Naive thymus-derived CD4-positive, alpha-beta T cell (primary cell): ENCODE measurements at regions of chr13 and their contacts with region 1.

Region 1: GRCh38 chr13:113208424-113209335 is at the start of gene PCID2:
- DNase-seq: peak; percentile 87 to 99 (median 93)
- ATAC-seq: peak; percentile 81
- H3K4me3 ChIP-seq: peak within 1 kb of the TSS; percentile 79
- H3K4me3 Mint-ChIP-seq: peak within 1 kb of the TSS; percentile 87 to 94 (median 90)
- H3K27ac ChIP-seq: peak within 1 kb of the TSS; percentile 88
- H3K27ac Mint-ChIP-seq: peak within 1 kb of the TSS; percentile 83 to 95 (median 92)
- H3K4me1 ChIP-seq: peaks cover 25 to 46% of the 10 kb centered on the region in 2 donors
- H3K4me1 Mint-ChIP-seq: peaks cover 46 to 68% (median 57%) of the 10 kb centered on the region in 7 donors
- H3K27me3 ChIP-seq: no peaks in the 10 kb centered on the region
- H3K27me3 Mint-ChIP-seq: no peaks in the 10 kb centered on the region
- total RNA-seq, gene PCID2: 44.2 to 83.7 (median 77.1) TPM

Region 2: GRCh38 chr13:112689303-112690165 is 519.1 kb before region 1 on chr13 and contains the start of gene ATP11A:
- CTCF ChIA-PET with region 1: no interaction called
- POLR2A ChIA-PET with region 1: no interaction called
- intact Hi-C with region 1: loop called (anchors 2 to 10 kb)
- DNase-seq: peak; percentile 67 to 90 (median 74)
- ATAC-seq: peak; percentile 85
- H3K4me3 ChIP-seq: peak within 1 kb of the TSS; percentile 78
- H3K4me3 Mint-ChIP-seq: peak within 1 kb of the TSS; percentile 79 to 96 (median 94)
- H3K27ac ChIP-seq: peak within 1 kb of the TSS; percentile 88
- H3K27ac Mint-ChIP-seq: peak within 1 kb of the TSS; percentile 79 to 96 (median 90)
- H3K4me1 ChIP-seq: peaks cover 15 to 26% of the 10 kb centered on the region in 2 donors
- H3K4me1 Mint-ChIP-seq: peaks cover 39 to 54% (median 50%) of the 10 kb centered on the region in 7 donors
- H3K27me3 ChIP-seq: no peaks in the 10 kb centered on the region
- H3K27me3 Mint-ChIP-seq: no peaks in the 10 kb centered on the region
- total RNA-seq, gene ATP11A: 45.0 to 111 (median 79.8) TPM

Region 3: DNA sequence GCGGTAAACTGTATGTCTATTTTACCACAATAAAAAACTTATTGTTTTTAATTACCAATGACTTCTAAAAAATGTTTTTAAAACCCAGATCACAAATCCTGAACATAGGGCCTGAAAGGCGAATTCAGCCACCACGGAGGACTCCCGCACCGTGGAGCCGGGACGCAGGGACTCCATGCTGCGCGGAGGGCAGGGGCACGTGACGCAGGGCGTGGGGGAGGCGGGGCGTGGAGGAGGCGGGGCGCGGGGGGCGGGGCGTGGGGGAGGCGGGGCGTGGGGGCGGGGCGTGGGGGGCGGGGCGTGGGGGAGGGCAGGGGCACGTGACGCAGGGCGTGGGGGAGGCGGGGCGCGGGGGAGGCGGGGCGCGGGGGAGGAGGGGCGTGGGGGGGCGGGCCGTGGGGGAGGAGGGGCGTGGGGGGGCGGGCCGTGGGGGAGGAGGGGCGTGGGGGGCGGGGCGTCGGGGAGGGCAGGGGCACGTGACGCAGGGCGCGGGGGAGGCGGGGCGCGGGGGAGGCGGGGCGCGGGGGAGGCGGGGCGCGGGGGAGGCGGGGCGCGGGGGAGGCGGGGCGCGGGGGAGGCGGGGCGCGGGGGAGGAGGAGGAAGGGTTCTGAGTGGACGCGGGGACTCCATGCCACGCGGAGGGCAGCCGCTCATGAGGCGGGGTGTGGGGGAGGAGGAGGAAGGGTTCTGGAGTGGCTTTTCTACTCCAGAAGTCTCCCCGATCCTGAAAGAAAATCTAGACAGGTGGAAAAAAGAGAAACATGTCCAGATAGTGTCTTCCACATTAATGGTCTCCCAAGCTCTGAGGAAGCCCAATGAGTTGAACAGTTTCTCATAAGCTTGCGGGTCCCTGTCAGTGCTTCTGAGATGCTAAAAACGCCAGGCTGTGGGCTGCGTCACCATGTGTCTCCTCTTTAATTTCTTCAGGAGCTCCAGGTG is 54.6 kb before region 1 on chr13:
- CTCF ChIA-PET with region 1: no interaction called
- POLR2A ChIA-PET with region 1: interaction called, 19 read pairs
- intact Hi-C with region 1: loop called (anchors 1 kb)
- DNase-seq: peak; percentile 55 to 76 (median 70)
- ATAC-seq: peak; percentile 89
- H3K4me3 ChIP-seq: peak overlapping the region; percentile 82
- H3K4me3 Mint-ChIP-seq: peak overlapping the region; percentile 78 to 99 (median 86)
- H3K27ac ChIP-seq: peak overlapping the region; percentile 68
- H3K27ac Mint-ChIP-seq: peak overlapping the region in 8 of 9 donors; percentile 84 to 96 (median 88)
- H3K4me1 ChIP-seq: peaks cover 15 to 16% of the 10 kb centered on the region in 2 donors
- H3K4me1 Mint-ChIP-seq: peaks cover 9 to 26% (median 21%) of the 10 kb centered on the region in 7 donors
- H3K27me3 ChIP-seq: no peaks in the 10 kb centered on the region
- H3K27me3 Mint-ChIP-seq: peaks cover 0 to 27% (median 7%) of the 10 kb centered on the region in 5 donors

Region 4: DNA sequence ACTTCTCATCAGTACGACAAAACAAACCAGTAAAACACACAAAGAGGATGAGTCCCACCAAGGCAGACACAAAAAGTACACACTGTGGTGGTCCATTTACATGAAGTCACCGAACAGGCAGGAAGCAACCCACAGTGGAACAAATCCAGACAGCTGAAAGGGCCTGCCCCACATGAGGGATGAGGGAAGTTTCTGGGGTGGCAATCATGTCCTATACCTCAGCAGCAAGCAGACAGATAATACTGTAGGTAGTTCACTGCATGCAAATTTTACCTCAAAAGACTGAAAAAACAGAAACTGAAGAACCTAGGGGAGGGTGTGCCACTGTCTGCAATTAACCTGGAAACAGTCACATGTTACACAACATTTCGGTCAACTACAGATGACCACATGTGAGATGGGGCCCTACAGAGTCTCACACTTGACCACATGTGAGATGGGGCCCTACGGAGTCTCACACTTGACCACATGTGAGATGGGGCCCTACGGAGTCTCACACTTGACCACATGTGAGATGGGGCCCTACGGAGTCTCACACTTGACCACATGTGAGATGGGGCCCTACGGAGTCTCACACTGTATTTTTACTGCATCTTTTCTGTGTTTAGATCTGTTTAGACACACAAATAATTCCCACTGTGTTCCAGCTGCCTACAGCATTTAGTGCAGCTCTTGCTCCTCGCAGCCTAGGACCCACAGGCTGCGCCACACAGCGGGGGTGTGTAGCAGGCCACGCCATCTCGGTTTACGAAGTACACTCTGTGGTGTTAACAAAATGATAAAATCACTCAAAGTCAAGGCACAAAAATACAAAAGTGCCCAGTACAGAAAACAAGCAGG is 22.4 kb before region 1 on chr13:
- CTCF ChIA-PET with region 1: no interaction called
- POLR2A ChIA-PET with region 1: interaction called, 23 read pairs
- intact Hi-C with region 1: no loop called
- DNase-seq: no peak
- ATAC-seq: peak; percentile 62
- H3K4me3 ChIP-seq: no peak overlapping the region
- H3K4me3 Mint-ChIP-seq: peak overlapping the region in 5 of 10 donors; percentile 10 to 59 (median 57)
- H3K27ac ChIP-seq: no peak overlapping the region
- H3K27ac Mint-ChIP-seq: peak overlapping the region in 8 of 9 donors; percentile 40 to 94 (median 80)
- H3K4me1 ChIP-seq: peaks cover 6 to 49% of the 10 kb centered on the region in 2 donors
- H3K4me1 Mint-ChIP-seq: peaks cover 13 to 49% (median 14%) of the 10 kb centered on the region in 7 donors
- H3K27me3 ChIP-seq: no peaks in the 10 kb centered on the region
- H3K27me3 Mint-ChIP-seq: no peaks in the 10 kb centered on the region

Region 5: GRCh38 chr13:113288880-113289279 is 80.2 kb after region 1 on chr13:
- CTCF ChIA-PET with region 1: no interaction called
- POLR2A ChIA-PET with region 1: no interaction called
- intact Hi-C with region 1: no loop called
- DNase-seq: no peak
- ATAC-seq: no peak
- H3K4me3 ChIP-seq: no peak overlapping the region
- H3K4me3 Mint-ChIP-seq: no peak overlapping the region
- H3K27ac ChIP-seq: no peak overlapping the region
- H3K27ac Mint-ChIP-seq: no peak overlapping the region
- H3K4me1 ChIP-seq: peaks cover 4 to 10% of the 10 kb centered on the region in 2 donors
- H3K4me1 Mint-ChIP-seq: peaks cover 9 to 13% (median 10%) of the 10 kb centered on the region in 7 donors
- H3K27me3 ChIP-seq: no peaks in the 10 kb centered on the region
- H3K27me3 Mint-ChIP-seq: peaks cover 44 to 59% (median 49%) of the 10 kb centered on the region in 5 donors

Region 6: DNA sequence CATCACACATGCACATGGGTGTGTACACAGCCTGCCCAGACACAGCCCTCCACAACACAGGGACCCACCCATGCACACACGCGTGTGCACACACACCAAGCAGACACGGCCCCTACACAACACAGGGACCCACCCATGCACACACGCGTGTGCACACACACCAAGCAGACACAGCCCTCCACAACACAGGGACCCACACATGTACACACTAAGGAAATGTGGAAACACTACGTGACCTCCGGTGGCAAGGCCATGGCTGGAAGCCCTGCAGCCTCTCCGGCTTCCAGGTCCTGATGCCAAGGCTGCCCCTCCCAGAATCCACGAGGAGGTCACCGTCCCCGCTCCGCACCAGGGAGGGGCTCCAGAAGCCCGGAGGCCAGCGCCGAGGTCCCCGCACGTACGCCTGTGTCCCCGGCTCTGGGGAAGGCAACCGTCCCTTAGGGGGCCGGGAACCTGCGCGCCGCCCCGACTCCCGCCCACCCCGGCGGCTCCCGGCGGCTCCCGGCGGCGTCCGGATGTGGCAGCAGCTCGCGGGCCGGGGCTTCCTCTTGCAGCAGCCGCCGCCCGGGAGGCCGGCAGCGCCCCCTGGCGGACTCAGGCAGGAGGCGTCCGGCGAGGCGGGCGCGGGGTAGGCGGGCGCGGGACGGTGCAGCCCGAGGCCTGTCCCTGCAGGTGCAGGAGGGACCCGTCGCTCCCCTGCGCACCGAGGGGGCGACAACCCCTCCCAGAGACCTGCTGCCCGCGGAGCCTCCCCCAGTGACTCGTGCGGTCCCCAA is 185.1 kb after region 1 on chr13:
- CTCF ChIA-PET with region 1: no interaction called
- POLR2A ChIA-PET with region 1: no interaction called
- intact Hi-C with region 1: loop called (anchors 1 to 5 kb)
- DNase-seq: peak; percentile 75 to 91 (median 86)
- ATAC-seq: peak; percentile 99
- H3K4me3 ChIP-seq: peak overlapping the region; percentile 79
- H3K4me3 Mint-ChIP-seq: peak overlapping the region; percentile 84 to 97 (median 90)
- H3K27ac ChIP-seq: peak overlapping the region; percentile 74
- H3K27ac Mint-ChIP-seq: peak overlapping the region in 8 of 9 donors; percentile 29 to 89 (median 72)
- H3K4me1 ChIP-seq: peaks cover 0 to 7% of the 10 kb centered on the region in 2 donors
- H3K4me1 Mint-ChIP-seq: peaks cover 4 to 9% (median 5%) of the 10 kb centered on the region in 7 donors
- H3K27me3 ChIP-seq: no peaks in the 10 kb centered on the region
- H3K27me3 Mint-ChIP-seq: peaks cover 0 to 4% (median 0%) of the 10 kb centered on the region in 5 donors